Lower leg skin (tissue), 4 donors: ENCODE measurements at regions of chr12 and their contacts with region 1.

Region 1: DNA sequence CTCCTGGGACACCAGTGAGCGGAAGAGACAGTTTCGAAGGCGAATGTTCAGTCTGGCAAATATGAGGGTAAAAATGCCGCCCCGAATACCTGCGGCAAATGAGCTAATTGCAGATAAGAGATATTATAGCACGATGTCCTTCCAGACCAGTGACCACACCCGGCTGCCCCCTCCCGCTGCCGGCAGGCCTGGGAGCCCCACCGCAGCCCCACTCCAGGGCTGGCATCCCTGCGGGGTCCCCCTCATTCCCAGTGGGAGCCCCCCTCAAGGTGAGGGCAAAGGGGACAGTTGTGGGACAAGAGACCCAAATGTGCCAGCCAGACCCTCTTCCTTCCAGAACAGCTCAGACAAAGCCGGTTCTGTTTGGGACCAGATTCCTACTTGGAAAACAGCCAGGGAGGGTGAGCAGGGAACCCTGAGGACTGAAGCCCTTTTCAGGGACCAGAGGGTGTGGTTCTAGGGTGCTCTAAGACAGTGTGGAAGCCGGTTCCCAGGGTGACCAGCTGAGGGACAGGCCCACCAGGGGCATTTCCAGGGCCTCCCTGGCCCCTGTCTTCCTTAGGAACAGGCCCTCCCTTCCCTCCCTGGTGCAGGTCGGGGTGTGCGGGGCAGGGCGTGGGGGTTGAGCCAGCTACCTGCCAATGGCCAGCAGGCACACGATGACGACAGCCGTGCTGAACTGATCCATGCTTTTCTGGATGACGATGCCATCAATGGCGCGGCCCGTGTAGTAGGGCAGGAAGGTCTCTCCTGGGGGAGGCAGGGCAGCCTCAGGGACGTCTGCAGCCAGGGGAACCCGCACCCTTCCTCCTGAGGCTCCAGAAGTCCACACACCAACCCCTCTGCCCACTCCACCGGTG is 16.2 kb downstream of the ABCB9 start:
- DNase-seq: no peak
- H3K4me3 ChIP-seq: no peak overlapping the region
- CTCF ChIP-seq: no peak
- POLR2A ChIP-seq: no peak

Region 2: GRCh38 chr12:122803937-122804336 is 146.1 kb before region 1 on chr12:
- intact Hi-C with region 1: no loop called
- DNase-seq: no peak
- H3K4me3 ChIP-seq: no peak overlapping the region
- CTCF ChIP-seq: no peak
- POLR2A ChIP-seq: no peak

Region 3: GRCh38 chr12:122860346-122861090 is 89.5 kb before region 1 on chr12:
- intact Hi-C with region 1: loop called (anchors 2 kb)
- DNase-seq: peak; percentile 76 to 97
- H3K4me3 ChIP-seq: no peak overlapping the region
- CTCF ChIP-seq: peak in 1 of 3 donors; percentile 58
- POLR2A ChIP-seq: no peak

Region 4: DNA sequence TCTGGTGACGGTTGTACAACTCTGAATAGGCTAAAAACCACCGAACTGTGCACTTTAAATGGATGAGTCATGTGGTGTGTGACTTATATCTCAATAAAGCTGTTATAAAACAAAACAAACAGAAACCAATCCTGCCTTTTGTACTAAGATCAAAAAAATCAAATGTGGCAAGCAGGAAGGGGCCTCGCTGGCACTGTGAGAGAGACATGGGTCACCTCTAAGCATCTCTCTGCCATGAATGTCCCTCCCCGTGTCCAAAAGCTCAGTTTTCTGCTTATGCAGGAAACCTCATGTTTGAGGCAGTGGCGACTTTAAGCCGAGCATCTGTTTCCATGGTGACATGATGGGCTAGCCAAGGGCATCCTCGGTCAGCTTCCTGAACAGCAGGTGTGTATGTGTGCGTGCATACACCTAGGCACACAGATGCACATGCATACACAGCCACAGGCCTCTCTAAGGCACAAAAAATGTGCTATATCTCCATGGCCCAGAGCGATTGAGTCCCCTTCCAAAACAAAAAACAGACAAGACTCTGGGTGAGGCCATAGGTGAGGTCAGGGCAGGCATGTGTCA is 74.9 kb after region 1 on chr12:
- intact Hi-C with region 1: no loop called
- DNase-seq: no peak
- H3K4me3 ChIP-seq: no peak overlapping the region
- CTCF ChIP-seq: no peak
- POLR2A ChIP-seq: no peak